Heart right ventricle (tissue), 16 donors: ENCODE measurements at regions of chr13 and their contacts with region 1.

Region 1: GRCh38 chr13:67230404-67231288 is 510 bp upstream of the PCDH9 start:
- DNase-seq: peak; percentile 95 to 96
- ATAC-seq: peak; percentile 96 to 99 (median 98)
- H3K4me3 ChIP-seq: peak overlapping the region; percentile 52 to 88 (median 82)
- H3K27ac ChIP-seq: peak overlapping the region; percentile 88 to 98 (median 94)
- H3K4me1 ChIP-seq: peaks cover 0 to 46% (median 10%) of the 10 kb centered on the region in 9 donors
- H3K27me3 ChIP-seq: peaks cover 0 to 47% (median 0%) of the 10 kb centered on the region in 7 donors
- CTCF ChIP-seq: peak in 1 of 9 donors; percentile 4

Region 2: DNA sequence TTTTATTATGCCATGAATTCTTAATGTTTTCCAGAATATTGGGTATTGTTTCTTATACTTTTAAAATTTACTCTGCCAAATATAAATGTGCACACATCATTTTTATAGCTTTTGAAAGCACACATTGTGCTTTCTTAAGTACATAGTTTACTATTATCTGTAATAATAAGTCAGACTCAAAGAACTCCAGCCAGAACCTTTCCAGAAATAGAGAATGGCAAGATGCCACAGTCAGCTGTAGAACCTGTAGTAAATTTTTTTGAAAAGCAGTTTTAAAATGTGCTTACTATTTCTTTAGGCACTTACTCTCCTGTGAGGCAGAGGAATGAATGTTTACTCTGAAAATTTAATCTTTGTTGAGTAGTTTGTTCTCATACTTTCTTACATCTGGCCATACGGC is 1287.6 kb before region 1 on chr13:
- intact Hi-C with region 1: loop called in 4 of 10 experiments (anchors 5 to 10 kb)
- DNase-seq: no peak
- ATAC-seq: peak in 2 of 8 donors; percentile 32 to 35
- H3K4me3 ChIP-seq: peak overlapping the region in 3 of 10 donors; percentile 5 to 28 (median 6)
- H3K27ac ChIP-seq: peak overlapping the region in 2 of 10 donors; percentile 40 to 47
- H3K4me1 ChIP-seq: peaks cover 0 to 12% (median 0%) of the 10 kb centered on the region in 9 donors
- H3K27me3 ChIP-seq: no peaks in the 10 kb centered on the region
- CTCF ChIP-seq: no peak

Region 3: DNA sequence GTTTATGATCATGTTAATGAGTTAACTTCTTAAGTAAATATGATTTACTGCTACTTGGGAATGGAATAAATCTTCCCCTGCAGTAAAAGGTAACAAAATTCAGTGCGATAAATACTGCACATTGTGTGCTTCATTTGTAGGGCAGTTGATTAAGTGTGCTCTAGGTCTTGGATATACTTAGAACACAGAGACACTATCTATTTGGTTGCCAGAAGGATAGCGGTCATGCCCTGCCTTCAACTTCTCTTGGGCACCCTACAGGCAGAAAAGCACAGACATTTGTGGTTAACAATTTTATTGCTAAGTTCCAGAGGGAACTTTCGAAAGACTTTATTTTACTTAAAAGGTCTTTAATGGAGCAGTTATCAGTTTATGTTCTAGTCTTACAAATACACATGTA is 606.3 kb before region 1 on chr13:
- intact Hi-C with region 1: loop called in 2 of 10 experiments (anchors 5 to 10 kb)
- DNase-seq: no peak
- ATAC-seq: peak; percentile 51 to 98 (median 82)
- H3K4me3 ChIP-seq: no peak overlapping the region
- H3K27ac ChIP-seq: peak overlapping the region in 2 of 10 donors; percentile 4 to 32
- H3K4me1 ChIP-seq: peaks cover 0 to 8% (median 0%) of the 10 kb centered on the region in 9 donors
- H3K27me3 ChIP-seq: no peaks in the 10 kb centered on the region
- CTCF ChIP-seq: peak in 2 of 9 donors; percentile 7 to 15

Region 4: GRCh38 chr13:66835040-66835628 is 395.5 kb before region 1 on chr13:
- intact Hi-C with region 1: loop called in 3 of 10 experiments (anchors 5 to 10 kb)
- DNase-seq: peak; percentile 77 to 90
- ATAC-seq: peak; percentile 64 to 94 (median 88)
- H3K4me3 ChIP-seq: no peak overlapping the region
- H3K27ac ChIP-seq: peak overlapping the region in 8 of 10 donors; percentile 5 to 74 (median 44)
- H3K4me1 ChIP-seq: peaks cover 0 to 19% (median 6%) of the 10 kb centered on the region in 9 donors
- H3K27me3 ChIP-seq: no peaks in the 10 kb centered on the region
- CTCF ChIP-seq: peak in 1 of 9 donors; percentile 15

Region 5: GRCh38 chr13:67075239-67075638 is 155.4 kb before region 1 on chr13:
- intact Hi-C with region 1: loop called in 5 of 10 experiments (anchors 5 to 10 kb)
- DNase-seq: no peak
- ATAC-seq: peak in 7 of 8 donors; percentile 43 to 77 (median 72)
- H3K4me3 ChIP-seq: peak overlapping the region in 6 of 10 donors; percentile 28 to 37 (median 35)
- H3K27ac ChIP-seq: no peak overlapping the region
- H3K4me1 ChIP-seq: peaks cover 0 to 3% (median 0%) of the 10 kb centered on the region in 9 donors
- H3K27me3 ChIP-seq: no peaks in the 10 kb centered on the region
- CTCF ChIP-seq: peak in 6 of 9 donors; percentile 33 to 62 (median 52)

Region 6: GRCh38 chr13:67134417-67135129 is 96.1 kb before region 1 on chr13:
- intact Hi-C with region 1: loop called in 2 of 10 experiments (anchors 5 kb)
- DNase-seq: no peak
- ATAC-seq: peak in 6 of 8 donors; percentile 42 to 68 (median 61)
- H3K4me3 ChIP-seq: peak overlapping the region in 9 of 10 donors; percentile 2 to 40 (median 30)
- H3K27ac ChIP-seq: peak overlapping the region; percentile 33 to 83 (median 73)
- H3K4me1 ChIP-seq: peaks cover 0 to 42% (median 14%) of the 10 kb centered on the region in 9 donors
- H3K27me3 ChIP-seq: no peaks in the 10 kb centered on the region
- CTCF ChIP-seq: no peak

Region 7: GRCh38 chr13:67752759-67753158 is 522.1 kb after region 1 on chr13:
- intact Hi-C with region 1: no loop called
- DNase-seq: no peak
- ATAC-seq: no peak
- H3K4me3 ChIP-seq: no peak overlapping the region
- H3K27ac ChIP-seq: no peak overlapping the region
- H3K4me1 ChIP-seq: no peaks in the 10 kb centered on the region
- H3K27me3 ChIP-seq: no peaks in the 10 kb centered on the region
- CTCF ChIP-seq: no peak